ENCODE measurements at regions of chr11 and their contacts with region 1.

Region 1: GRCh38 chr11:14537134-14537599 is 17.0 kb upstream of the PSMA1 start:
- DNase-seq: peak in 1 of 2 donors; percentile 41
- ATAC-seq: peak; percentile 68

Region 2: DNA sequence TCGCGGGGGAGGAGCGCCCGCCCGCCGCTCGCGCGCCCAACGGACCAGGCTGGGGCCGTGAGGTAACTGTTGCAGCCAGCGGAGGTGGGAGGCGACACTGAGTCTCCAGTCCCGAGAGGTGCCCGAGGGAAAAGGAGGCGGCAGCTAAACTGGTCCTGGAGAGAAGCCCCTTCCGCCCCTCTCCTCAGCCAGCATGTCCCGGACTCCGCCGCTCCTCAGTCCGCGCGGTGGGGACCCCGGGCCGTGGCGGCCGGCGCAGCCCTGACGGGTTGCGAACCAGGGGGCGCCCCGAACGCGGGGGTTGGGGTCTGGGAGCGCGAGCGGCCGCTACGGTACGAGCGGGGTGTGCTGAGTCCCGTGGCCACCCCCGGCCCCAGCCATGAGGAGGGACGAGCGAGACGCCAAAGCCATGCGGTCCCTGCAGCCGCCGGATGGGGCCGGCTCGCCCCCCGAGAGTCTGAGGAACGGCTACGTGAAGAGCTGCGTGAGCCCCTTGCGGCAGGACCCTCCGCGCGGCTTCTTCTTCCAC is 106.6 kb after region 1 on chr11 and contains the start of gene PDE3B:
- intact Hi-C with region 1: loop called in 1 of 2 experiments (anchors 10 kb)
- DNase-seq: peak; percentile 89 to 90
- ATAC-seq: peak; percentile 89
- total RNA-seq, gene PDE3B: 23.9 to 32.9 TPM